ENCODE measurements at regions of chr6 and their contacts with region 1.

Region 1: DNA sequence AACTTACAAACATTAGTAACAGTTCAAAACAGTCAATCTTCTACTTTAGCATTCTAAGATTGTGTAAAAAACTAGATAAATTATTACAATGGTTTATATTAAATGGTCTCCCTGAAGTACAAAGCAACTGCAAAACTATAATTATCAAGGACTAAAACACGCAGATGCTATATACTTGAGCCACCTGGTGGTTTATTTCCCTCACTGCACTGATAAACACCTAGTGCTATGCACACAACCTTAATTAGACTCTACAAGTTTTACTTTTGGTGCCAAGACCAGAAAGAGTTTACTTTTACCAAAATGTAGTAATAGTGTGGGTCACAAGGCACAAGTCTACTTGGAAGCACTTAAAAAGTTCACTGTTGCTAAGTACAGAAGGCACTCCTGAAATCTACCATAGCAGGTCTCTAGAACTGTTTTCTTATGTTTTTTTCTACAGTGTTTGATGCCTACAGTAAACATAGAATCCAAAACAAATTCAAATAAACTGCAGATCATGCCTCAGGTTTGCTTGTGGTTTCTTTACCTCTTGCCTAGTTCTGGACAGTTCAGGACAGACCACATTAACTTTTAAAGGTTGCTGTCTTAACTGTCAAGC is 49.2 kb downstream of the GMDS start:
- DNase-seq: no peak
- ATAC-seq: peak; percentile 50

Region 2: GRCh38 chr6:2132416-2132815 is 63.8 kb before region 1 on chr6:
- intact Hi-C with region 1: no loop called
- DNase-seq: no peak
- ATAC-seq: no peak

Region 3: GRCh38 chr6:2353412-2354137 is 157.4 kb after region 1 on chr6:
- intact Hi-C with region 1: loop called (anchors 5 kb)
- DNase-seq: peak; percentile 69
- ATAC-seq: peak; percentile 60